B cell (primary cell): ENCODE measurements at regions of chr5 and their contacts with region 1.

Region 1: GRCh38 chr5:54517174-54518092 is at the start of gene SNX18:
- DNase-seq: peak; percentile 94
- ATAC-seq: peak; percentile 85
- H3K4me3 ChIP-seq: peak within 1 kb of the TSS; percentile 69 to 97 (median 92)
- H3K4me3 Mint-ChIP-seq: peak within 1 kb of the TSS; percentile 92
- H3K27ac ChIP-seq: peak within 1 kb of the TSS; percentile 9 to 70
- H3K27ac Mint-ChIP-seq: peak within 1 kb of the TSS; percentile 84
- H3K4me1 ChIP-seq: peaks cover 30 to 47% of the 10 kb centered on the region in 2 donors
- H3K4me1 Mint-ChIP-seq: peaks cover 45% of the 10 kb centered on the region
- H3K27me3 ChIP-seq: no peaks in the 10 kb centered on the region
- H3K27me3 Mint-ChIP-seq: no peaks in the 10 kb centered on the region
- CTCF ChIP-seq: peak; percentile 90
- total RNA-seq, gene SNX18: 31.6 and 34.2 TPM in 2 replicates

Region 2: DNA sequence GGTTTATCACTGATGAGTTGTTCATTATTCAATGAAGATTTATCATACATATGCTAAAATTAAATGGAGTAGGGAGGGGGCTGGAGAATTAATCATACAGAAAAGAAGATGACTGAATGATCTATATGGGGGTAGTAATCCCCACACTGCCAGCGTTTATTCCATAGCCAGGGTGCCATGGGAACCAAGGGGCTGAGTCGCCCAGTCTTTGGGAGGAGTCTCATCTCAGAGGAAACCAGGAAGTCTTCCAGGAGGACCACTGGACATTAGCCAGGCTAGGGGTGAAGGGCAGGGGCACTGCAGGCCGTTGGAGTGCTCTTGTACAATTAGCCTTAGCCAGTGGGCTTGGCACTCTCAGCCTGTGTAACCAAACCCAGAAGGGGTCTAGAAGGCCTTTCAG is 433.6 kb before region 1 on chr5:
- CTCF ChIA-PET with region 1: no interaction called
- POLR2A ChIA-PET with region 1: no interaction called
- intact Hi-C with region 1: no loop called
- DNase-seq: no peak
- ATAC-seq: no peak
- H3K4me3 ChIP-seq: no peak overlapping the region
- H3K4me3 Mint-ChIP-seq: no peak overlapping the region
- H3K27ac ChIP-seq: no peak overlapping the region
- H3K27ac Mint-ChIP-seq: no peak overlapping the region
- H3K4me1 ChIP-seq: no peaks in the 10 kb centered on the region
- H3K4me1 Mint-ChIP-seq: peaks cover 5% of the 10 kb centered on the region
- H3K27me3 ChIP-seq: no peaks in the 10 kb centered on the region
- H3K27me3 Mint-ChIP-seq: no peaks in the 10 kb centered on the region
- CTCF ChIP-seq: no peak

Region 3: GRCh38 chr5:54610197-54610944 is 92.9 kb after region 1 on chr5:
- CTCF ChIA-PET with region 1: interaction called, 4 read pairs
- POLR2A ChIA-PET with region 1: no interaction called
- intact Hi-C with region 1: loop called (anchors 1 kb)
- DNase-seq: peak; percentile 85
- ATAC-seq: peak; percentile 95
- H3K4me3 ChIP-seq: peak overlapping the region in 2 of 5 experiments; percentile 9 to 45
- H3K4me3 Mint-ChIP-seq: peak overlapping the region; percentile 52
- H3K27ac ChIP-seq: peak overlapping the region; percentile 50 to 57
- H3K27ac Mint-ChIP-seq: peak overlapping the region; percentile 82
- H3K4me1 ChIP-seq: peaks cover 32 to 34% of the 10 kb centered on the region in 2 donors
- H3K4me1 Mint-ChIP-seq: peaks cover 46% of the 10 kb centered on the region
- H3K27me3 ChIP-seq: no peaks in the 10 kb centered on the region
- H3K27me3 Mint-ChIP-seq: no peaks in the 10 kb centered on the region
- CTCF ChIP-seq: no peak

Region 4: DNA sequence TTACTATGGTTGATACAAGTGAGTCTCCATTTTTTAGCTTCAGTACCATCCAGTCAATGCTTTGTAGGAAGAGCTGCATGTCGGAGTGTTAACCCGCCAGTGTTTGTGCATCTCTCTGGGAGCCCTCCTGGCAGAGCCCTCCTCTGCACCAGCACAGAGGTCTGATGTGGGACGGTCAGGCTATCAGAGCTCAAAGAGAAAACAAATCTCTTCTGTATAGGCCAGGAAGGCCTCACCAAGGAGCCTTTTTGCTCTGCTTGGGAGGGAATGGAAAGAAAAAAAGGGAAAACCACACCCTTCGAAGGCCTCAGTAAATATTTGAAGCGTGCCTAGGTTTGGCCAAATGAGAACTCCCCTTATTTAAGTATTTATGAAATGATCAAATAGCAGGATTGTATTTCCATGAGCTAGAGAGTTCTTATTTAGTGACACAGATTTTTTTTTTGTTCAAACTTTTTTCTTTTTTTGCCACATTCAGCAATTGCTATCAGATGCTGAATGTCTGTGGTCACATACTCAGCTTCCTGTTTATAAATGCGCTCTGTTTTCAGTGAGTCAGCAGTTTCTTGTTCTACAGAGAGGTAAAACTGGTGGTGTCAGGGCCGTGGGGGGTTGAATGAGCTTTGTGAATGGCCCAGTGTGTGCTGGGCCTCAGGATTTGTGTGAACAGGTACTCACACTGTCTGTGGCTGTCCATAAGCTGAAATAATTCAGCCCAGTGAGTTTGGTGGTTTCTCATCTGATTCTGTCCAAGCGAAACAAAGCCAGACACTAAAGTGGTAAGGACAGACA is 226.8 kb after region 1 on chr5:
- CTCF ChIA-PET with region 1: interaction called, 3 read pairs
- POLR2A ChIA-PET with region 1: no interaction called
- intact Hi-C with region 1: loop called (anchors 2 kb)
- DNase-seq: peak; percentile 51
- ATAC-seq: peak; percentile 81
- H3K4me3 ChIP-seq: no peak overlapping the region
- H3K4me3 Mint-ChIP-seq: peak overlapping the region; percentile 68
- H3K27ac ChIP-seq: no peak overlapping the region
- H3K27ac Mint-ChIP-seq: peak overlapping the region; percentile 75
- H3K4me1 ChIP-seq: peaks cover 20 to 26% of the 10 kb centered on the region in 2 donors
- H3K4me1 Mint-ChIP-seq: peaks cover 42% of the 10 kb centered on the region
- H3K27me3 ChIP-seq: peaks cover 0 to 2% (median 0%) of the 10 kb centered on the region in 4 experiments
- H3K27me3 Mint-ChIP-seq: no peaks in the 10 kb centered on the region
- CTCF ChIP-seq: no peak

Region 5: DNA sequence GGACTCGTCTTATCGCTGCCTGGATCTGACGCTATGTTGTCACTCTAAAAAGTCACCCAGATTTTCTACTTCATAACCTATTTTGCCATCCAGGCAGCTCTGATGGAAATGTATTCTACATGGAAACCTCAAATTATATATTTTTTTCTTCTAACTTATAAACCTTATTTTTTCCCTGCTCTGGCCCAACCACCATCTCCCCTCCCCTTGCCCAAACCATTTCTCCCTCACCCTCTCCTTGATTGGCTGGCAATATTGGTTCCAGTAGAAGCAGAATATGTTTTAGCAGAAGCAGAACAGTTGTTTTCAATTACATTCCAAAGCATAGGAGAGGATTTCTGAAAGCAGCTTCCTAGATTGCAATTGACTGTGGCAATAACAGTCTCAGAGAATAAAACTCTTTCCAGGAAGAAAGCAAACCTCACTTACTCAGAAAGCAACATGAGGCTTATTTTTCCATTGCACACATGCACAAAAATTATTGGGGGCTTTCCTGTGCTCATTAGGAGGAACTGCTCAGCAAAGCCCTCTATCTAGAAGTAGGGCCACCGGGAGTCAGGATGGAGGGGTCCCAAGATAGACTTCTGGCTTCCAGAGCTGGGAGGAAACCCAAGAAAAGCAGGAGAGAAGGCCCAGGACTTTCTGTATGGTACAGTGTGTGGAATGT is 276.2 kb after region 1 on chr5:
- CTCF ChIA-PET with region 1: interaction called, 17 read pairs
- POLR2A ChIA-PET with region 1: no interaction called
- intact Hi-C with region 1: no loop called
- DNase-seq: no peak
- ATAC-seq: no peak
- H3K4me3 ChIP-seq: no peak overlapping the region
- H3K4me3 Mint-ChIP-seq: no peak overlapping the region
- H3K27ac ChIP-seq: no peak overlapping the region
- H3K27ac Mint-ChIP-seq: no peak overlapping the region
- H3K4me1 ChIP-seq: peaks cover 3 to 5% of the 10 kb centered on the region in 2 donors
- H3K4me1 Mint-ChIP-seq: peaks cover 33% of the 10 kb centered on the region
- H3K27me3 ChIP-seq: no peaks in the 10 kb centered on the region
- H3K27me3 Mint-ChIP-seq: no peaks in the 10 kb centered on the region
- CTCF ChIP-seq: no peak

Region 6: DNA sequence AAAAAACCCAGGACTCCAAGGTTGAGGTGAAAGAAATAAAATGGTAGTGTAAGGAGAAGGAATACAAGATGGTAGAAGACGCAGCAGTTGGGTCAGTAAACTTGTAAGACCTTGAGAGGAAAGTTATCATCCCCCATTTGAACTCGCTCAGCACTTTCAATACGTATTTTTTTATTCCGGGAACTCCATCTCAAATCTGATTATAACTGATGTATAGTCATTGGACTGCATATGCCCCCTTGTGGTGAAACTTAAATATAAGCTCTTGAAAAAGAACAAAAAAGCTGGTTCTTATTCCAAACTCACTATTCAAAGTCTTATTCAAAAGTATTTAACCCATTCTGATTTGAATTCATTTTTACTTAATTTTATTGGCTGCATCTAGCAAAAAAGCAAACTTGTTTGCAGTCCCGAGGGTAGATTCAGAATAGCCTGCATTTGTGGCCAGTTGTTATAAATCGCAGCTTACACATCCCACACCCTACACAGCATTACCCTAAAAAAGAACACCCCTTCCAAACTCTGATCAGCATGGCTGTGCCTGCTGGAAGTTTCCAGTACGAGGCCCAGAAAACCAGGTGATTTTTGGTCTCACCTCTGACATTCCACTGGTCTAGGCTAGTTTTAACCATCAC is 350.0 kb after region 1 on chr5:
- CTCF ChIA-PET with region 1: interaction called, 139 read pairs
- POLR2A ChIA-PET with region 1: interaction called, 3 read pairs
- intact Hi-C with region 1: loop called (anchors 1 kb)
- DNase-seq: peak; percentile 75
- ATAC-seq: peak; percentile 60
- H3K4me3 ChIP-seq: peak overlapping the region in 3 of 5 experiments; percentile 11 to 32 (median 20)
- H3K4me3 Mint-ChIP-seq: peak overlapping the region; percentile 32
- H3K27ac ChIP-seq: no peak overlapping the region
- H3K27ac Mint-ChIP-seq: no peak overlapping the region
- H3K4me1 ChIP-seq: peaks cover 3 to 5% of the 10 kb centered on the region in 2 donors
- H3K4me1 Mint-ChIP-seq: peaks cover 6% of the 10 kb centered on the region
- H3K27me3 ChIP-seq: peaks cover 0 to 5% (median 2%) of the 10 kb centered on the region in 4 experiments
- H3K27me3 Mint-ChIP-seq: peaks cover 34% of the 10 kb centered on the region
- CTCF ChIP-seq: peak; percentile 81

Region 7: GRCh38 chr5:55626790-55627189 is 1109.4 kb after region 1 on chr5:
- CTCF ChIA-PET with region 1: no interaction called
- POLR2A ChIA-PET with region 1: no interaction called
- intact Hi-C with region 1: no loop called
- DNase-seq: no peak
- ATAC-seq: no peak
- H3K4me3 ChIP-seq: no peak overlapping the region
- H3K4me3 Mint-ChIP-seq: no peak overlapping the region
- H3K27ac ChIP-seq: no peak overlapping the region
- H3K27ac Mint-ChIP-seq: no peak overlapping the region
- H3K4me1 ChIP-seq: no peaks in the 10 kb centered on the region
- H3K4me1 Mint-ChIP-seq: no peaks in the 10 kb centered on the region
- H3K27me3 ChIP-seq: no peaks in the 10 kb centered on the region
- H3K27me3 Mint-ChIP-seq: no peaks in the 10 kb centered on the region
- CTCF ChIP-seq: no peak